ENCODE measurements at regions of chr10 and their contacts with region 1.

Region 1: GRCh38 chr10:95374597-95375209 is 83.9 kb upstream of the PDLIM1 start:
- DNase-seq: peak; percentile 82
- H3K4me3 Mint-ChIP-seq: no peak overlapping the region
- H3K27ac Mint-ChIP-seq: no peak overlapping the region
- H3K4me1 Mint-ChIP-seq: peaks cover 5% of the 10 kb centered on the region
- H3K27me3 Mint-ChIP-seq: peaks cover 24% of the 10 kb centered on the region

Region 2: DNA sequence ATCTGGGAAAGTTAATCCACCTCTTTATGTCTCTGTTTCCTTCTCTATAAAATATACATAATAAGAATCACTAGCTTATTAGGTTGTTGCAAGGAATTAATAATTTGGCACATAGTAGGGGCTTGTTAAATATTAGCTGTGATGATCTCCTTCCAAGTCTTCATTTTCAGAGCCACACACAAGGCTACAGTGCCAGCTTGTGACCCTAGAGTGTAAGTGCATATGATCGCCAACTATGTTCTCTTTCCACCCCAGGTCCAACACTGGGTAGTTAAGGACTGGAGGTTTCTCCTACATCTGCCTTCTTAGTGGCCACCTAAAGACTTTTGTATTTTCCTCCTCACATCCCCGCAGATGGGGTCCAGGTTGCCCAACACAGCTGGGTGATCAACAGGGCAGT is 198.6 kb before region 1 on chr10:
- CTCF ChIA-PET with region 1: no interaction called
- DNase-seq: no peak
- H3K4me3 Mint-ChIP-seq: no peak overlapping the region
- H3K27ac Mint-ChIP-seq: no peak overlapping the region
- H3K4me1 Mint-ChIP-seq: no peaks in the 10 kb centered on the region
- H3K27me3 Mint-ChIP-seq: peaks cover 8% of the 10 kb centered on the region

Region 3: DNA sequence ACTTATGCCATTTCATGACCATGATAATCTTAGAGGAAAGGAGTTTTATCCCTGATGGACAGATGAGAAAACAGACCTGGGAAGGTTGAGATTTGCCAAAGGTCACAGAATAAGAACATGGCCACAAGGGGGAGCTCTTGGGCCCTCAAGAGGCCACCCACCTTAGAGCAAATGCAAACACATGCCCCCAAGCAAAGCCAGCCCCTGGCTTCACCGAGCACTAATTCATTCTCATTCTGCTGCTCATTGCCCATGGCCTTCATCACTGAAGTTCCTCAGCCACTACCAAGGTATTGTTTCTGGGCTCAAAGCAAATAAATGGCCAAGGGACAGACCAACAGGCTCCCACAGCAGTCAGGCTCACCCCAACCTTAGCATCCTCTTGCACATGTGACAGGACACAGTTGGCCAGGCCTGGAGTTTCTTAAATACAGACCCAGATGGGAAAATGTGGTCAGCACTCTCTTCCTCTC is 128.1 kb before region 1 on chr10:
- CTCF ChIA-PET with region 1: interaction called, 11 read pairs
- DNase-seq: peak; percentile 80
- H3K4me3 Mint-ChIP-seq: no peak overlapping the region
- H3K27ac Mint-ChIP-seq: no peak overlapping the region
- H3K4me1 Mint-ChIP-seq: peaks cover 20% of the 10 kb centered on the region
- H3K27me3 Mint-ChIP-seq: peaks cover 11% of the 10 kb centered on the region

Region 4: GRCh38 chr10:95260397-95260881 is 114.3 kb before region 1 on chr10:
- CTCF ChIA-PET with region 1: no interaction called
- DNase-seq: no peak
- H3K4me3 Mint-ChIP-seq: no peak overlapping the region
- H3K27ac Mint-ChIP-seq: no peak overlapping the region
- H3K4me1 Mint-ChIP-seq: no peaks in the 10 kb centered on the region
- H3K27me3 Mint-ChIP-seq: peaks cover 8% of the 10 kb centered on the region

Region 5: DNA sequence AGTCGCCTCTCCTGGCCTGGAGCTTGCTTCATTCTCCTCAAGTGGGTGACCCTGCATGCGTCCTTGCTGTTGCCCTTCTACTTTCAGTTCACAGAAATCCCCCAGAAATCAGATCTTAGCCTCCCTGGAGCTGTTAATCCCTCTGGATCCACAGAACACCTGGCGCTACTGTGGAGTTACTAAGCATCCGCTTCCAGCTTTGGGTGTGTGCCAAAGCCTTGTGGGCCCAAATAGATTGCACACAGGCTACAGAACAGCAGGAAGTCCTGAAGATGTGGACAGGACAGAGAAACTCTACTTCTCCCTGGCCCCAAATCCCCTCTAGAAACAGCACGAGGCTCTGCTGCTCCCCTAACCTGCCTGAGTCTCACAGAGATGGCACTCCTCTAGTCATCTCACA is 47.3 kb before region 1 on chr10:
- CTCF ChIA-PET with region 1: no interaction called
- DNase-seq: no peak
- H3K4me3 Mint-ChIP-seq: no peak overlapping the region
- H3K27ac Mint-ChIP-seq: no peak overlapping the region
- H3K4me1 Mint-ChIP-seq: no peaks in the 10 kb centered on the region
- H3K27me3 Mint-ChIP-seq: peaks cover 14% of the 10 kb centered on the region

Region 6: GRCh38 chr10:95341716-95342130 is 33.0 kb before region 1 on chr10:
- CTCF ChIA-PET with region 1: no interaction called
- DNase-seq: no peak
- H3K4me3 Mint-ChIP-seq: no peak overlapping the region
- H3K27ac Mint-ChIP-seq: no peak overlapping the region
- H3K4me1 Mint-ChIP-seq: no peaks in the 10 kb centered on the region
- H3K27me3 Mint-ChIP-seq: peaks cover 4% of the 10 kb centered on the region

Region 7: GRCh38 chr10:95394161-95394880 is 19.6 kb after region 1 on chr10:
- CTCF ChIA-PET with region 1: interaction called, 13 read pairs
- DNase-seq: no peak
- H3K4me3 Mint-ChIP-seq: no peak overlapping the region
- H3K27ac Mint-ChIP-seq: no peak overlapping the region
- H3K4me1 Mint-ChIP-seq: peaks cover 5% of the 10 kb centered on the region
- H3K27me3 Mint-ChIP-seq: peaks cover 6% of the 10 kb centered on the region

Region 8: DNA sequence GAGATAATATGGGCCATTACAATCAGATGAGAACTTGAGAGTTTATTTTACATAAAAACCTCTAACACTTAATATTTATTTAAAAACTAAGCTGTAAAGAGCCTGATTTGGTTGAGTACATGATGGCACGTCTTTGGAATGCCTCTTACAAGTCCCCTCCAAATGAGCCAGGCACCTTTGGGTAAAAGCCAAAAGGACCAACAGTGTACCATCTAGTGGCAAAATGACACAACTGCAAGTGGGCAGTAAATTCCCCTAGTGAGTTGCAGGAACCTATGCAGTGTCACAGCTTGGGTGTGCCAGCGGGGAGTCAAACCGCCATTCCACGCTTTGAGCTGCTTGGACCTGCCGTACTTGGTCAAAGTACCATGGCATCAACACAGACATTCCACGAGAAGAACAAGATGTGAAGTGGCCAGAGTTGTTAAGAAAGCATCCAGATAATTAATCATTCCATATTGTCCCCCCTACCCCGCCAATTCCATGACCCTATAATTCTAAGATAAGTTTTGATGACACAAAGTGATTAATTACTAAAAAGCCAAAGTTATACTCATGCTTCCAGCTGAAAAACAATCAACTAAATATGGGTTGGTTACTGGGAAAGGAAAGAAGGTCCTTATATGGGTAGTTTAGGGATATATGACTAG is 71.3 kb after region 1 on chr10:
- CTCF ChIA-PET with region 1: interaction called, 25 read pairs
- DNase-seq: peak; percentile 41
- H3K4me3 Mint-ChIP-seq: no peak overlapping the region
- H3K27ac Mint-ChIP-seq: no peak overlapping the region
- H3K4me1 Mint-ChIP-seq: peaks cover 9% of the 10 kb centered on the region
- H3K27me3 Mint-ChIP-seq: peaks cover 26% of the 10 kb centered on the region